Uterus (tissue), 4 donors: ENCODE measurements at regions of chr18 and their contacts with region 1.

Region 1: GRCh38 chr18:59070181-59070912 is 69.3 kb upstream of the SEC11C start:
- DNase-seq: peak; percentile 83 to 88
- H3K4me3 ChIP-seq: no peak overlapping the region
- H3K27ac ChIP-seq: no peak overlapping the region
- H3K4me1 ChIP-seq: no peaks in the 10 kb centered on the region
- H3K27me3 ChIP-seq: no peaks in the 10 kb centered on the region
- CTCF ChIP-seq: peak; percentile 83 to 88 (median 86)
- POLR2A ChIP-seq: peak in 1 of 2 donors; percentile 14

Region 2: GRCh38 chr18:58768293-58768974 is 301.9 kb before region 1 on chr18:
- intact Hi-C with region 1: loop called (anchors 5 kb)
- DNase-seq: peak; percentile 66 to 67
- H3K4me3 ChIP-seq: peak overlapping the region in 1 of 2 donors; percentile 27
- H3K27ac ChIP-seq: no peak overlapping the region
- H3K4me1 ChIP-seq: peaks cover 0 to 8% of the 10 kb centered on the region in 2 donors
- H3K27me3 ChIP-seq: no peaks in the 10 kb centered on the region
- CTCF ChIP-seq: peak; percentile 76 to 88 (median 82)
- POLR2A ChIP-seq: no peak

Region 3: GRCh38 chr18:58781627-58782194 is 288.6 kb before region 1 on chr18:
- intact Hi-C with region 1: loop called (anchors 5 kb)
- DNase-seq: peak; percentile 79 to 84
- H3K4me3 ChIP-seq: no peak overlapping the region
- H3K27ac ChIP-seq: peak overlapping the region in 1 of 2 donors; percentile 52
- H3K4me1 ChIP-seq: no peaks in the 10 kb centered on the region
- H3K27me3 ChIP-seq: no peaks in the 10 kb centered on the region
- CTCF ChIP-seq: peak; percentile 90 to 96 (median 92)
- POLR2A ChIP-seq: no peak

Region 4: DNA sequence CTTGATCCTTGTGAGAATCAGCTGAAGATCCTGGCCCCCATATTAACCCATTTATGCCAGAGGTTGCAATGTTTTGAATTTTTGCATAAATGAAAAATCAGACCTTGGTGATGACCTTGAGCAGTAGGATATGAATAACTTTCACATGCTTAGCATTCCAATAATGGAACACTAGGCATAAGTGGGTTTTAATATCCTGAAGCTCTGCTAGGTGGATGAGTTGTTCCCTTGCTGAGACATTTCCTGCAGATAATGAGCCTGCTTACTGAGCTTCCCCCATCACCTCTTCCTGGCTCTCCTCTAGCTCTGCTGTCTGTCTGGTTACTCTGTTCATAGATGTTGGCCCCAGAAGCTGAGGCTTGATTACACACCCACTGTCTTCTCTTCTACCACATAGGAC is 43.8 kb after region 1 on chr18:
- intact Hi-C with region 1: no loop called
- DNase-seq: no peak
- H3K4me3 ChIP-seq: no peak overlapping the region
- H3K27ac ChIP-seq: no peak overlapping the region
- H3K4me1 ChIP-seq: no peaks in the 10 kb centered on the region
- H3K27me3 ChIP-seq: no peaks in the 10 kb centered on the region
- CTCF ChIP-seq: no peak
- POLR2A ChIP-seq: no peak